GM12878 (cell line): ENCODE measurements at regions of chr9 and their contacts with region 1.

Region 1: GRCh38 chr9:108761655-108762347 is 94.0 kb downstream of the ACTL7B start:
- DNase-seq: no peak
- ATAC-seq: peak; percentile 87
- H3K4me3 ChIP-seq: no peak overlapping the region
- H3K27ac ChIP-seq: no peak overlapping the region
- H3K4me1 ChIP-seq: peaks cover under 1% of the 10 kb centered on the region; the same call in 1 of the 2 replicates
- H3K27me3 ChIP-seq: no peaks in the 10 kb centered on the region
- CTCF ChIP-seq: peak; percentile 79 to 83 (median 82)
- EP300 ChIP-seq: no peak
- POLR2A ChIP-seq: no peak
- RAD21 ChIP-seq: peak; percentile 82

Region 2: GRCh38 chr9:107425101-107426045 is 1336.4 kb before region 1 on chr9:
- CTCF ChIA-PET with region 1: interaction called, 5 read pairs
- POLR2A ChIA-PET with region 1: no interaction called
- RAD21 ChIA-PET with region 1: no interaction called
- SMC1A ChIA-PET with region 1: interaction called, 3 read pairs
- in situ Hi-C with region 1: no loop called
- intact Hi-C with region 1: loop called (anchors 5 kb)
- DNase-seq: no peak
- ATAC-seq: peak; percentile 90
- H3K4me3 ChIP-seq: no peak overlapping the region
- H3K27ac ChIP-seq: no peak overlapping the region
- H3K4me1 ChIP-seq: no peaks in the 10 kb centered on the region
- H3K27me3 ChIP-seq: no peaks in the 10 kb centered on the region
- CTCF ChIP-seq: peak; percentile 67 to 97 (median 95)
- EP300 ChIP-seq: no peak
- POLR2A ChIP-seq: no peak
- RAD21 ChIP-seq: no peak

Region 3: GRCh38 chr9:107472581-107473340 is 1289.0 kb before region 1 on chr9:
- CTCF ChIA-PET with region 1: no interaction called
- POLR2A ChIA-PET with region 1: no interaction called
- RAD21 ChIA-PET with region 1: no interaction called
- SMC1A ChIA-PET with region 1: no interaction called
- in situ Hi-C with region 1: loop called (anchors 10 kb)
- intact Hi-C with region 1: no loop called
- DNase-seq: no peak
- ATAC-seq: no peak
- H3K4me3 ChIP-seq: no peak overlapping the region
- H3K27ac ChIP-seq: no peak overlapping the region
- H3K4me1 ChIP-seq: no peaks in the 10 kb centered on the region
- H3K27me3 ChIP-seq: no peaks in the 10 kb centered on the region
- CTCF ChIP-seq: no peak
- EP300 ChIP-seq: no peak
- POLR2A ChIP-seq: no peak
- RAD21 ChIP-seq: no peak

Region 4: DNA sequence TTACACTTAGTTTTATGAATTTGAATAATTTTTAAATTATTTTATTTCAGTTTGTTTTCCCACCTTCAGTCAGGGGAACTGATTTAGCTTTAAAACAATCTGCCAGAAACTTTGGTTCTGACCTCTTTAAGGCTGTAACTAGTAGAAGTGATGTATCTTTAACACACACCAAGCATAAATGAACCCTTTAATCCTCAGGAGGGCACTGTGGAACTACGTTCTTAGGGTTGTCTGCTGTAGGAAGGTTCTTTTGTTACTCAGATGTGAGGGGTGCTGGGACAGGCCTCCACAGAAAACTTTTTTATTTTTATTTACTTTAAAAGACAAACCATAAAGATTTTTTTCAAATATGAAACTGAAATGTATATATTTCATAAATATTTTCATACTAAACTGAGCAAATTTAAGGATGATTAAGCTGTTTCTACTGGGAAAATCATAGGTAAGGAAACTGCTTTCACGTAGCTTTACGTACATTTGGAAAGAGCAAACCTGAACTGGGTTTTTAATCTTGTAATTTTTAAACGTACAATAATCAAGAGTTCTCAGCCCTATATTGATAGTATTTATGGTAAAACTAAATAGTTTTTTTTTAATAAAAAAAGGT is 1277.6 kb before region 1 on chr9:
- CTCF ChIA-PET with region 1: interaction called, 3 read pairs
- POLR2A ChIA-PET with region 1: no interaction called
- RAD21 ChIA-PET with region 1: interaction called, 3 read pairs
- SMC1A ChIA-PET with region 1: interaction called, 3 read pairs
- in situ Hi-C with region 1: loop called (anchors 10 kb)
- intact Hi-C with region 1: loop called (anchors 5 kb)
- DNase-seq: peak; percentile 7
- ATAC-seq: peak; percentile 91
- H3K4me3 ChIP-seq: no peak overlapping the region
- H3K27ac ChIP-seq: no peak overlapping the region
- H3K4me1 ChIP-seq: 0 out of 2 replicates have a peak, but pooled peaks cover 2% of the 10 kb centered on the region
- H3K27me3 ChIP-seq: peaks cover 4 to 15% of the 10 kb centered on the region in 2 experiments; a peak in 3 of 4 replicates
- CTCF ChIP-seq: peak; percentile 38 to 61 (median 45); a peak in 5 of 6 replicates
- EP300 ChIP-seq: no peak
- POLR2A ChIP-seq: no peak
- RAD21 ChIP-seq: peak; percentile 82

Region 5: DNA sequence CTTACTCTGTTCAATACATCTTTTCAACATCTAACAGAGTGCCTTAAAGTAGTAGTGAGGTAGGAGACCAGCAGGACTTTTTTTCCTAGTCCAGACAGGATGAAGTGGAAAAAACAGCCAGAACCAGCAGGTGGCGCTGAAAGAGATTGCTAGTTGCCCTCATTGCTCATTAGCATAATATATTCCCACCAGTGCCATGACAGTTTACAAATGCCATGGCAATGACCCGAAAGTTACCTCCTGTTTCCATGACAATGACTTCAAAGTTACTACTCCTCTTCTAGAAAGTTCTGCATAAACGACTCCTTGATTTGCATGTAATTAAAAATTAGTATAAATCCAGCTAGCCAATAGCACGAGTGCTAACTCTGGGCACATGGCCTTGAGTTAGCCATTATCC is 293.4 kb before region 1 on chr9:
- CTCF ChIA-PET with region 1: interaction called, 13 read pairs
- POLR2A ChIA-PET with region 1: no interaction called
- RAD21 ChIA-PET with region 1: interaction called, 3 read pairs
- SMC1A ChIA-PET with region 1: interaction called, 14 read pairs
- in situ Hi-C with region 1: no loop called
- intact Hi-C with region 1: loop called (anchors 1 kb)
- DNase-seq: no peak
- ATAC-seq: peak; percentile 76
- H3K4me3 ChIP-seq: no peak overlapping the region
- H3K27ac ChIP-seq: no peak overlapping the region
- H3K4me1 ChIP-seq: no peaks in the 10 kb centered on the region
- H3K27me3 ChIP-seq: no peaks in the 10 kb centered on the region
- CTCF ChIP-seq: peak; percentile 40 to 44 (median 42)
- EP300 ChIP-seq: no peak
- POLR2A ChIP-seq: no peak
- RAD21 ChIP-seq: peak; percentile 35; the same call in 1 of the 2 replicates

Region 6: GRCh38 chr9:108953983-108954574 is 192.3 kb after region 1 on chr9:
- CTCF ChIA-PET with region 1: interaction called, 6 read pairs
- POLR2A ChIA-PET with region 1: no interaction called
- RAD21 ChIA-PET with region 1: interaction called, 4 read pairs
- SMC1A ChIA-PET with region 1: interaction called, 9 read pairs
- in situ Hi-C with region 1: no loop called
- intact Hi-C with region 1: loop called (anchors 2 kb)
- DNase-seq: no peak
- ATAC-seq: peak; percentile 69
- H3K4me3 ChIP-seq: no peak overlapping the region
- H3K27ac ChIP-seq: no peak overlapping the region
- H3K4me1 ChIP-seq: no peaks in the 10 kb centered on the region
- H3K27me3 ChIP-seq: no peaks in the 10 kb centered on the region
- CTCF ChIP-seq: peak; percentile 40 to 61 (median 50); a peak in 5 of 6 replicates
- EP300 ChIP-seq: no peak
- POLR2A ChIP-seq: no peak
- RAD21 ChIP-seq: peak; percentile 54